HCT116 (cell line): ENCODE measurements at regions of chr7 and their contacts with region 1.

Region 1: GRCh38 chr7:101185258-101185839 is 5.3 kb upstream of the NAT16 start:
- DNase-seq: no peak
- ATAC-seq: no peak
- H3K4me3 ChIP-seq: no peak overlapping the region
- H3K27ac ChIP-seq: no peak overlapping the region
- H3K4me1 ChIP-seq: peaks cover 6 to 23% of the 10 kb centered on the region in 2 experiments; a peak in 3 of 4 replicates
- H3K27me3 ChIP-seq: no peaks in the 10 kb centered on the region
- CTCF ChIP-seq: no peak
- POLR2A ChIP-seq: no peak
- RAD21 ChIP-seq: no peak

Region 2: GRCh38 chr7:101077303-101078089 is 107.9 kb before region 1 on chr7:
- CTCF ChIA-PET with region 1: no interaction called
- POLR2A ChIA-PET with region 1: no interaction called
- RAD21 ChIA-PET with region 1: no interaction called
- intact Hi-C with region 1: loop called (anchors 5 kb)
- DNase-seq: peak; percentile 68
- ATAC-seq: peak; percentile 98
- H3K4me3 ChIP-seq: no peak overlapping the region
- H3K27ac ChIP-seq: no peak overlapping the region
- H3K4me1 ChIP-seq: peaks cover 0 to 10% of the 10 kb centered on the region in 2 experiments; a peak in 2 of 4 replicates
- H3K27me3 ChIP-seq: no peaks in the 10 kb centered on the region
- CTCF ChIP-seq: peak; percentile 88 to 96 (median 95)
- POLR2A ChIP-seq: no peak
- RAD21 ChIP-seq: peak; percentile 94

Region 3: GRCh38 chr7:101112233-101112632 is 73.1 kb before region 1 on chr7:
- CTCF ChIA-PET with region 1: no interaction called
- POLR2A ChIA-PET with region 1: no interaction called
- RAD21 ChIA-PET with region 1: no interaction called
- intact Hi-C with region 1: no loop called
- DNase-seq: no peak
- ATAC-seq: no peak
- H3K4me3 ChIP-seq: no peak overlapping the region
- H3K27ac ChIP-seq: no peak overlapping the region
- H3K4me1 ChIP-seq: peaks cover 3 to 37% of the 10 kb centered on the region in 2 experiments
- H3K27me3 ChIP-seq: no peaks in the 10 kb centered on the region
- CTCF ChIP-seq: no peak
- POLR2A ChIP-seq: no peak
- RAD21 ChIP-seq: no peak

Region 4: GRCh38 chr7:101165075-101165957 is 20.0 kb before region 1 on chr7 and contains the start of gene VGF:
- CTCF ChIA-PET with region 1: interaction called, 3 read pairs
- POLR2A ChIA-PET with region 1: interaction called, 13 read pairs
- RAD21 ChIA-PET with region 1: no interaction called
- intact Hi-C with region 1: no loop called
- DNase-seq: peak; percentile 83
- ATAC-seq: peak; percentile 65
- H3K4me3 ChIP-seq: peak within 1 kb of the TSS; percentile 73 to 78
- H3K27ac ChIP-seq: peak within 1 kb of the TSS; percentile 97; the same call in 1 of the 2 replicates
- H3K4me1 ChIP-seq: peaks cover 59 to 97% of the 10 kb centered on the region in 2 experiments
- H3K27me3 ChIP-seq: no peaks in the 10 kb centered on the region
- CTCF ChIP-seq: no peak
- POLR2A ChIP-seq: peak; percentile 24
- RAD21 ChIP-seq: no peak
- total RNA-seq, gene VGF: 43.2 TPM

Region 5: GRCh38 chr7:101173752-101174244 is 11.6 kb before region 1 on chr7:
- CTCF ChIA-PET with region 1: interaction called, 4 read pairs
- POLR2A ChIA-PET with region 1: interaction called, 15 read pairs
- RAD21 ChIA-PET with region 1: no interaction called
- intact Hi-C with region 1: no loop called
- DNase-seq: peak; percentile 80
- ATAC-seq: peak; percentile 82
- H3K4me3 ChIP-seq: peak overlapping the region; percentile 49 to 63
- H3K27ac ChIP-seq: peak overlapping the region; percentile 67
- H3K4me1 ChIP-seq: peaks cover 24 to 47% of the 10 kb centered on the region in 2 experiments
- H3K27me3 ChIP-seq: no peaks in the 10 kb centered on the region
- CTCF ChIP-seq: no peak
- POLR2A ChIP-seq: no peak
- RAD21 ChIP-seq: no peak

Region 6: GRCh38 chr7:101436857-101437576 is 251.7 kb after region 1 on chr7:
- CTCF ChIA-PET with region 1: no interaction called
- POLR2A ChIA-PET with region 1: no interaction called
- RAD21 ChIA-PET with region 1: no interaction called
- intact Hi-C with region 1: no loop called
- DNase-seq: peak; percentile 37
- ATAC-seq: peak; percentile 90
- H3K4me3 ChIP-seq: no peak overlapping the region
- H3K27ac ChIP-seq: no peak overlapping the region
- H3K4me1 ChIP-seq: peaks cover 7 to 14% of the 10 kb centered on the region in 2 experiments; a peak in 3 of 4 replicates
- H3K27me3 ChIP-seq: no peaks in the 10 kb centered on the region
- CTCF ChIP-seq: no peak
- POLR2A ChIP-seq: no peak
- RAD21 ChIP-seq: no peak

Region 7: GRCh38 chr7:101644879-101645278 is 459.5 kb after region 1 on chr7:
- CTCF ChIA-PET with region 1: no interaction called
- POLR2A ChIA-PET with region 1: no interaction called
- RAD21 ChIA-PET with region 1: no interaction called
- intact Hi-C with region 1: no loop called
- DNase-seq: no peak
- ATAC-seq: no peak
- H3K4me3 ChIP-seq: no peak overlapping the region
- H3K27ac ChIP-seq: no peak overlapping the region
- H3K4me1 ChIP-seq: no peaks in the 10 kb centered on the region
- H3K27me3 ChIP-seq: no peaks in the 10 kb centered on the region
- CTCF ChIP-seq: no peak
- POLR2A ChIP-seq: no peak
- RAD21 ChIP-seq: no peak